ENCODE measurements at regions of chr1 and their contacts with region 1.

Region 1: GRCh38 chr1:91997607-91998195 is 32.1 kb upstream of the EPHX4 start:
- DNase-seq: peak in 8 of 9 experiments; percentile 13 to 78 (median 43)
- ATAC-seq: no peak
- H3K4me3 ChIP-seq: no peak overlapping the region
- H3K4me3 Mint-ChIP-seq: no peak overlapping the region
- H3K27ac ChIP-seq: no peak overlapping the region
- H3K27ac Mint-ChIP-seq: no peak overlapping the region
- H3K4me1 ChIP-seq: no peaks in the 10 kb centered on the region
- H3K4me1 Mint-ChIP-seq: no peaks in the 10 kb centered on the region
- H3K27me3 ChIP-seq: no peaks in the 10 kb centered on the region
- H3K27me3 Mint-ChIP-seq: no peaks in the 10 kb centered on the region
- CTCF ChIP-seq: peak; percentile 90

Region 2: DNA sequence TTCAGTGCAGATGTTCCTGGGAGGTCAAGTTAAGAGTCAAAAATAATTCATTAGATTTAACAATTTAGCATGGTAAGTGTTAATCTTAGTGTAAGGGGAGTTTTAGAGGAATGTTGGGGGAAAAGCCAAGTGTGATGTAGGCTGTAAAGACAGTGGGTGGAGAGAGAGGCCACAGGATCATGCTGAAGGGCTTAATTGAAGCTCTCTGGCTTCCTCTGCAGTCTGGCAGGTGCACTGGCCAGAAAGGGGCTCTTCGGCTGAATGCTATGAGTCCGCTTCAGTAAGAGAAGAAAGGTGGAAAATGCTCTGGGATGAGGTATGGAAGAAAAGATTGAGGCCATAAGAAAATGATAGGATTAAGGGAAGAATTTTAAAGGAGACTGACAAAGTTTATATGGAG is 45.5 kb before region 1 on chr1:
- CTCF ChIA-PET with region 1: no interaction called
- POLR2A ChIA-PET with region 1: no interaction called
- intact Hi-C with region 1: no loop called
- DNase-seq: no peak
- ATAC-seq: no peak
- H3K4me3 ChIP-seq: no peak overlapping the region
- H3K4me3 Mint-ChIP-seq: no peak overlapping the region
- H3K27ac ChIP-seq: no peak overlapping the region
- H3K27ac Mint-ChIP-seq: no peak overlapping the region
- H3K4me1 ChIP-seq: peaks cover 13% of the 10 kb centered on the region
- H3K4me1 Mint-ChIP-seq: peaks cover 17% of the 10 kb centered on the region
- H3K27me3 ChIP-seq: no peaks in the 10 kb centered on the region
- H3K27me3 Mint-ChIP-seq: no peaks in the 10 kb centered on the region
- CTCF ChIP-seq: no peak

Region 3: GRCh38 chr1:91981996-91982609 is 15.6 kb before region 1 on chr1:
- CTCF ChIA-PET with region 1: interaction called, 11 read pairs
- POLR2A ChIA-PET with region 1: no interaction called
- intact Hi-C with region 1: no loop called
- DNase-seq: no peak
- ATAC-seq: no peak
- H3K4me3 ChIP-seq: no peak overlapping the region
- H3K4me3 Mint-ChIP-seq: no peak overlapping the region
- H3K27ac ChIP-seq: no peak overlapping the region
- H3K27ac Mint-ChIP-seq: no peak overlapping the region
- H3K4me1 ChIP-seq: no peaks in the 10 kb centered on the region
- H3K4me1 Mint-ChIP-seq: no peaks in the 10 kb centered on the region
- H3K27me3 ChIP-seq: no peaks in the 10 kb centered on the region
- H3K27me3 Mint-ChIP-seq: no peaks in the 10 kb centered on the region
- CTCF ChIP-seq: no peak

Region 4: GRCh38 chr1:92310185-92310597 is 312.5 kb after region 1 on chr1:
- CTCF ChIA-PET with region 1: interaction called, 10 read pairs
- POLR2A ChIA-PET with region 1: no interaction called
- intact Hi-C with region 1: loop called in 1 of 2 experiments (anchors 5 kb)
- DNase-seq: peak in 2 of 9 experiments; percentile 52 to 66
- ATAC-seq: peak; percentile 61
- H3K4me3 ChIP-seq: no peak overlapping the region
- H3K4me3 Mint-ChIP-seq: no peak overlapping the region
- H3K27ac ChIP-seq: no peak overlapping the region
- H3K27ac Mint-ChIP-seq: no peak overlapping the region
- H3K4me1 ChIP-seq: peaks cover 18% of the 10 kb centered on the region
- H3K4me1 Mint-ChIP-seq: peaks cover 39% of the 10 kb centered on the region
- H3K27me3 ChIP-seq: no peaks in the 10 kb centered on the region
- H3K27me3 Mint-ChIP-seq: no peaks in the 10 kb centered on the region
- CTCF ChIP-seq: peak; percentile 75

Region 5: GRCh38 chr1:92623187-92623778 is 625.6 kb after region 1 on chr1:
- CTCF ChIA-PET with region 1: interaction called, 12 read pairs
- POLR2A ChIA-PET with region 1: no interaction called
- intact Hi-C with region 1: loop called (anchors 1 kb)
- DNase-seq: peak in 2 of 9 experiments; percentile 39 to 57
- ATAC-seq: no peak
- H3K4me3 ChIP-seq: no peak overlapping the region
- H3K4me3 Mint-ChIP-seq: no peak overlapping the region
- H3K27ac ChIP-seq: no peak overlapping the region
- H3K27ac Mint-ChIP-seq: no peak overlapping the region
- H3K4me1 ChIP-seq: no peaks in the 10 kb centered on the region
- H3K4me1 Mint-ChIP-seq: no peaks in the 10 kb centered on the region
- H3K27me3 ChIP-seq: no peaks in the 10 kb centered on the region
- H3K27me3 Mint-ChIP-seq: no peaks in the 10 kb centered on the region
- CTCF ChIP-seq: peak; percentile 81

Region 6: GRCh38 chr1:92951141-92951582 is 953.5 kb after region 1 on chr1:
- CTCF ChIA-PET with region 1: no interaction called
- POLR2A ChIA-PET with region 1: no interaction called
- intact Hi-C with region 1: loop called in 1 of 2 experiments (anchors 10 kb)
- DNase-seq: peak in 2 of 9 experiments; percentile 39 to 62
- ATAC-seq: peak; percentile 77
- H3K4me3 ChIP-seq: no peak overlapping the region
- H3K4me3 Mint-ChIP-seq: no peak overlapping the region
- H3K27ac ChIP-seq: peak overlapping the region in 1 of 2 experiments; percentile 4
- H3K27ac Mint-ChIP-seq: no peak overlapping the region
- H3K4me1 ChIP-seq: peaks cover 38% of the 10 kb centered on the region
- H3K4me1 Mint-ChIP-seq: peaks cover 39% of the 10 kb centered on the region
- H3K27me3 ChIP-seq: no peaks in the 10 kb centered on the region
- H3K27me3 Mint-ChIP-seq: no peaks in the 10 kb centered on the region
- CTCF ChIP-seq: no peak